Posterior vena cava (tissue), 2 donors: ENCODE measurements at regions of chr1 and their contacts with region 1.

Region 1: DNA sequence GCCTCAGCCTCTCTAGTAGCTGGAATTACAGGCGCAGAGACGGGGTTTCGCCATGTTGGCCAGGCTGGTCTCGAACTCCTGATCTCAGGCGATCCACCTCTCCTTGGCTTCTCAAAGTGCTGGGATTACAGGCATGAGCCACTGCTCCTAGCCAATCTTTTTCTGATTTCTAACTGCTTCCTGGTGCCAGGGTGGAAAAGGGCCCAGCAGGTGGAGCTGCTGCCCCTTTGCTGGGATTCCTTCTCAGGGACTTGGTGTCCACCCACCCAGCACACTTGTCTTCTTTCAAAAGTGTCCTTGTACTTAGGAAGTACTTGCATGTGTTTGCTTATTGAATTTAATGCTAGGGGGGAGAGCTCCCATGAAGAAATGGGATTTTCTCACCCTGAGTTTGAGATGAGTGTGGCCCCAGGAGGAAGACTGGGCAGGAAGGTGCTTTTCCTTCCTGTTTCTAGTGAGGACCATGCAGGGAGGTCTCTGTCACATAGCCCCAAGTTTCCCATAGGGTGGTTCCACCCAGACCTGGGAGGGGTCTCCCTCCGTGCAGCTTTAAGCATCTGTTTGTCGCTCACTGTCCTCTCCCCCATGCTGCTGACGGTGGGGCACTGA is 14.2 kb downstream of the UTP11 start:
- DNase-seq: peak; percentile 75

Region 2: GRCh38 chr1:38064232-38064903 is 37.7 kb after region 1 on chr1:
- intact Hi-C with region 1: no loop called
- DNase-seq: no peak

Region 3: GRCh38 chr1:38834937-38835827 is 808.5 kb after region 1 on chr1:
- intact Hi-C with region 1: loop called in 1 of 2 experiments (anchors 10 kb)
- DNase-seq: no peak